Calu3 (cell line): ENCODE measurements at regions of chr16 and their contacts with region 1.

Region 1: GRCh38 chr16:56115817-56116576 is 75.3 kb upstream of the GNAO1 start:
- DNase-seq: no peak
- H3K4me3 Mint-ChIP-seq: no peak overlapping the region
- H3K27ac Mint-ChIP-seq: no peak overlapping the region
- H3K4me1 Mint-ChIP-seq: no peaks in the 10 kb centered on the region
- H3K27me3 Mint-ChIP-seq: peaks cover 61% of the 10 kb centered on the region
- CTCF ChIP-seq: no peak

Region 2: DNA sequence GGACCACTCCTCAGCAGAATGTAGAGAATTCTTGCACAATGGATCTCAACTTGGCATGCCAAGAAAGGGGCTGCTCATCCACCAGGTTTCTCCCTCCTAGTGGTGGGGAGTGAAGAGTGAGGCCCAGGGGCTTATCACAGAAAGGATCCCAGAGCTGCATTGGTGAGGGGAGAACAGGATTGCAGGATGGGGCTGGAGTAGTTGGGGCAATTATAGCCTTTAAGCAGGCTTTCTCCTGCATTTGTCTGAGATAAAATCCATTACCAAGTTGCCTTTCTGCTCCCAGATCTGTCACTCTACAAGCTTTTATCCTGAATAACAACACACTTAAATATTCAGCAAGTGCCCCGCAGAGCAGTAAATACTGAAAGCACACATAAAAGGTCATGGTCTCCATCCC is 110.0 kb before region 1 on chr16:
- CTCF ChIA-PET with region 1: interaction called, 12 read pairs
- intact Hi-C with region 1: no loop called
- DNase-seq: no peak
- H3K4me3 Mint-ChIP-seq: no peak overlapping the region
- H3K27ac Mint-ChIP-seq: no peak overlapping the region
- H3K4me1 Mint-ChIP-seq: no peaks in the 10 kb centered on the region
- H3K27me3 Mint-ChIP-seq: peaks cover 38% of the 10 kb centered on the region
- CTCF ChIP-seq: no peak

Region 3: DNA sequence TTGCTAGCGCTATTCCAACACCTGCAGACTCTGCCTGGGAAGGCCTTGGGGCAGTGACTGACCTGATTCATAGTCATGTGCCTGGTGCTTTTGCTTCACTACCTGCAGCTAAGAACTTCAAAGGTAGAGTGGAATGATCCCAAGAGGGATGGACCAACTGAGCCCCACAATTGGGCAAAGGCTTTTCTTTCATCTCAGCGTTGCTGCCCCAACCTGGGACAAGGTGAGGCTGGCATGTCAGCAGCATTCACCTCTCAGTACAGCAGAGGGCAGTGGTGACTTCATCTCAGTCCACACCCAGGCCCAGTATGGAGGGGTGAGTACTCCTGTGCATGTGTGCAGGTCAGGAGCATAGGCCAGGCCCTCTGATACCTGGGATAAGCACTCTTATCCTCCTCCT is 74.3 kb before region 1 on chr16:
- CTCF ChIA-PET with region 1: no interaction called
- intact Hi-C with region 1: loop called (anchors 10 kb)
- DNase-seq: peak; percentile 53
- H3K4me3 Mint-ChIP-seq: no peak overlapping the region
- H3K27ac Mint-ChIP-seq: no peak overlapping the region
- H3K4me1 Mint-ChIP-seq: no peaks in the 10 kb centered on the region
- H3K27me3 Mint-ChIP-seq: peaks cover 21% of the 10 kb centered on the region
- CTCF ChIP-seq: peak; percentile 32

Region 4: DNA sequence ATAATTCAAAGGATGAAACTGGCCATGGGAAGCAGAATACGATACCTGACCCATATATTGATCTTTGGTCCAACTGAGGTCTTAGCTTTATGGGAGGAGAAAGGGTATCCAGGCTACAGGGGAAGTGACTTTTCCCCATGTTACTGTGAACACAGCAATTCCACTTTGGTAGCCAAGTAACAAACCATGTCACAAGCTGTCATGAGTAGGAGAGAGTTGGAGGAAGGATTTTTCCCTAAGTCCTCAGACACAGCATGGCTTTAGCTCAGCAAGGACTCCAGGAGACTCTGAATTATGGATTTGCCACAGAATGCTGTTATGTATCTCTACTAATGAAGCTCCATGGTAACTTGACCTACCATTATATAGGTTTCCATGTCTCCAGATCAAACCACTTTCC is 18.8 kb after region 1 on chr16:
- CTCF ChIA-PET with region 1: no interaction called
- intact Hi-C with region 1: no loop called
- DNase-seq: no peak
- H3K4me3 Mint-ChIP-seq: no peak overlapping the region
- H3K27ac Mint-ChIP-seq: no peak overlapping the region
- H3K4me1 Mint-ChIP-seq: peaks cover 9% of the 10 kb centered on the region
- H3K27me3 Mint-ChIP-seq: peaks cover 18% of the 10 kb centered on the region
- CTCF ChIP-seq: no peak